ENCODE measurements at regions of chr6 and their contacts with region 1.

Region 1: GRCh38 chr6:35014801-35015200 is 125.7 kb downstream of the ANKS1A start:
- DNase-seq: peak; percentile 80
- H3K4me3 ChIP-seq: no peak overlapping the region
- H3K27ac ChIP-seq: peak overlapping the region; percentile 28
- H3K4me1 ChIP-seq: no peaks in the 10 kb centered on the region
- H3K27me3 ChIP-seq: no peaks in the 10 kb centered on the region
- CTCF ChIP-seq: no peak

Region 2: GRCh38 chr6:36979347-36979742 is 1964.5 kb after region 1 on chr6:
- CTCF ChIA-PET with region 1: interaction called, 18 read pairs
- dilution Hi-C with region 1: no loop called
- in situ Hi-C with region 1: no loop called
- intact Hi-C with region 1: no loop called
- DNase-seq: no peak
- H3K4me3 ChIP-seq: no peak overlapping the region
- H3K27ac ChIP-seq: no peak overlapping the region
- H3K4me1 ChIP-seq: peaks cover 4% of the 10 kb centered on the region
- H3K27me3 ChIP-seq: no peaks in the 10 kb centered on the region
- CTCF ChIP-seq: peak in 1 of 2 donors; percentile 34